ENCODE measurements at regions of chr3 and their contacts with region 1.

Region 1: GRCh38 chr3:39707314-39707909 is 102.0 kb upstream of the MYRIP start:
- DNase-seq: no peak
- ATAC-seq: no peak
- H3K4me3 Mint-ChIP-seq: no peak overlapping the region
- H3K27ac Mint-ChIP-seq: no peak overlapping the region
- H3K4me1 Mint-ChIP-seq: no peaks in the 10 kb centered on the region
- H3K27me3 Mint-ChIP-seq: peaks cover 4% of the 10 kb centered on the region
- CTCF ChIP-seq: peak; percentile 33

Region 2: DNA sequence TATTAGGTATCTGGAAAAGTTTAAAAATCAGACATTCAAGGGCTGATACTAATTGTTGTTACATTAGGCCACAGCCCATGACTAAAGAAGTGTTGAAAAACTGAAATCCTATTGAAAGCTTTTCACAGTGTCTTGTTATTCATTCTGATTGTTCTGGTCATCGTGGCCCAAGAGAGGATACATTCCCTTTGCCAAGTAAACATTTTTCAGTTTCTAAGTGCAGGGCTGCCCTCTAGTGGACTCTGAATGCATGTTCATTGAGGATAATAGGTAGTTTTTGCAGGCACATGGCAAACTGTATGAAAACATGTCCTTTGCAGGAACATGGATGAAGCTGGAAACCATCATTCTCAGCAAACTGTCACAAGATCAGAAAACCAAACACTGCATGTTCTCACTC is 283.1 kb after region 1 on chr3:
- CTCF ChIA-PET with region 1: no interaction called
- POLR2A ChIA-PET with region 1: no interaction called
- intact Hi-C with region 1: loop called (anchors 2 kb)
- DNase-seq: no peak
- ATAC-seq: no peak
- H3K4me3 Mint-ChIP-seq: no peak overlapping the region
- H3K27ac Mint-ChIP-seq: no peak overlapping the region
- H3K4me1 Mint-ChIP-seq: no peaks in the 10 kb centered on the region
- H3K27me3 Mint-ChIP-seq: peaks cover 9% of the 10 kb centered on the region
- CTCF ChIP-seq: no peak

Measured in activated B cell treated with CpG ODN at 0.5 μM for 24 hours (primary cell).